Ascending aorta (tissue), 2 donors: ENCODE measurements at regions of chr4 and their contacts with region 1.

Region 1: DNA sequence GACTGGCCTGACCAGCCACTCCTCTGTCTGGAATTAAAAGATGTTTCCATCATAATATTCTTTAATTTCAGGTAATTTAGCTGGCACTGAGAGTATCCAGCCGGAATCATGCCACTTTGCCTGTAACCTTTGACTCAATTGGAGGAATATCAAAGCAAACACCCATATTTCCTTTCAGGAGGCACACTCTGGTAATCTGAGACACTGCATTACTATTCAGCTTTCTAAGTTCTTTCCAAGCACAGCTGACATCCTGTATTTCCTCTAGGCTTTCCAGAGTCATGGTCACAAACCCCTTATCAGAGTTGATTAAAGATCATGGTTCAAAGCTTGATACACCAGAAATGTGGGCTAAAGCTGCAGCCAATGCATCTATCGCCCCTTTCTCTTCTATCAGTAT is 29.3 kb downstream of the INTS12 start:
- DNase-seq: no peak
- H3K4me3 ChIP-seq: no peak overlapping the region
- H3K27ac ChIP-seq: no peak overlapping the region
- H3K4me1 ChIP-seq: no peaks in the 10 kb centered on the region
- H3K27me3 ChIP-seq: no peaks in the 10 kb centered on the region
- CTCF ChIP-seq: no peak

Region 2: DNA sequence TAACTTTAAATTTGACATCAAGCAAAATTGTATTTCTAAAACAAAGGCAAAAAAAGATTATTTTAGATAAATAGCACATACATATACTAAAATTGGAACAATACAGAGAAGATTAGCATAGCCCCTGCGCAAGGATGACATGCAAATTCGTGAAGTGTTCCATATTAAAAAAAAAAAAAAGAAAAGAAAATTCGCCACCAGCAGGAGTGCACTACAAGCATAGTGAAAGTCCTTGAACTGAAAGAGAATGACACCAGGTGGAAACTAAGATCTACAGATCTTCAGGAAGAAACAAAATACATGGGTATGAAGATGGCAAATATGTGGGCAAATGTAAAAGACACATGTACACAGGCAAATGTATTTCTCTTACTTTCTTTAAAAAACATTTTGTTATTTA is 272.3 kb before region 1 on chr4:
- intact Hi-C with region 1: no loop called
- DNase-seq: no peak
- H3K4me3 ChIP-seq: no peak overlapping the region
- H3K27ac ChIP-seq: no peak overlapping the region
- H3K4me1 ChIP-seq: no peaks in the 10 kb centered on the region
- H3K27me3 ChIP-seq: no peaks in the 10 kb centered on the region
- CTCF ChIP-seq: no peak

Region 3: GRCh38 chr4:105520817-105521790 is 158.1 kb before region 1 on chr4:
- intact Hi-C with region 1: loop called (anchors 10 kb)
- DNase-seq: no peak
- H3K4me3 ChIP-seq: no peak overlapping the region
- H3K27ac ChIP-seq: no peak overlapping the region
- H3K4me1 ChIP-seq: no peaks in the 10 kb centered on the region
- H3K27me3 ChIP-seq: no peaks in the 10 kb centered on the region
- CTCF ChIP-seq: peak in 2 of 3 experiments; percentile 42 to 58

Region 4: GRCh38 chr4:105698607-105699006 is 19.4 kb after region 1 on chr4:
- intact Hi-C with region 1: loop called (anchors 2 kb)
- DNase-seq: no peak
- H3K4me3 ChIP-seq: no peak overlapping the region
- H3K27ac ChIP-seq: no peak overlapping the region
- H3K4me1 ChIP-seq: no peaks in the 10 kb centered on the region
- H3K27me3 ChIP-seq: no peaks in the 10 kb centered on the region
- CTCF ChIP-seq: no peak

Region 5: GRCh38 chr4:105741548-105741947 is 62.4 kb after region 1 on chr4:
- intact Hi-C with region 1: no loop called
- DNase-seq: no peak
- H3K4me3 ChIP-seq: no peak overlapping the region
- H3K27ac ChIP-seq: no peak overlapping the region
- H3K4me1 ChIP-seq: no peaks in the 10 kb centered on the region
- H3K27me3 ChIP-seq: no peaks in the 10 kb centered on the region
- CTCF ChIP-seq: no peak